Activated CD4-positive, alpha-beta T cell treated with anti-CD3 and anti-CD28 coated beads, Interleukin-2, amount 10 ng/mL, durations not matched to agents 7 days and 5 days (primary cell): ENCODE measurements at regions of chr1 and their contacts with region 1.

Region 1: GRCh38 chr1:36273024-36273423 is 33.1 kb upstream of the SH3D21 start:
- DNase-seq: no peak
- H3K4me3 Mint-ChIP-seq: no peak overlapping the region
- H3K27ac Mint-ChIP-seq: no peak overlapping the region
- H3K4me1 Mint-ChIP-seq: peaks cover 5% of the 10 kb centered on the region
- H3K27me3 Mint-ChIP-seq: no peaks in the 10 kb centered on the region

Region 2: GRCh38 chr1:36285448-36286101 is 12.6 kb after region 1 on chr1:
- CTCF ChIA-PET with region 1: interaction called, 11 read pairs
- POLR2A ChIA-PET with region 1: no interaction called
- DNase-seq: peak; percentile 83
- H3K4me3 Mint-ChIP-seq: no peak overlapping the region
- H3K27ac Mint-ChIP-seq: peak overlapping the region; percentile 76
- H3K4me1 Mint-ChIP-seq: peaks cover 17% of the 10 kb centered on the region
- H3K27me3 Mint-ChIP-seq: no peaks in the 10 kb centered on the region